Left cardiac atrium (tissue), 4 donors: ENCODE measurements at regions of chr6 and their contacts with region 1.

Region 1: GRCh38 chr6:158706096-158706982 is 56.5 kb downstream of the SYTL3 start:
- DNase-seq: peak; percentile 75
- ATAC-seq: peak; percentile 29 to 61

Region 2: GRCh38 chr6:158571826-158572652 is 134.3 kb before region 1 on chr6:
- intact Hi-C with region 1: no loop called
- DNase-seq: no peak
- ATAC-seq: peak in 1 of 2 donors; percentile 43

Region 3: DNA sequence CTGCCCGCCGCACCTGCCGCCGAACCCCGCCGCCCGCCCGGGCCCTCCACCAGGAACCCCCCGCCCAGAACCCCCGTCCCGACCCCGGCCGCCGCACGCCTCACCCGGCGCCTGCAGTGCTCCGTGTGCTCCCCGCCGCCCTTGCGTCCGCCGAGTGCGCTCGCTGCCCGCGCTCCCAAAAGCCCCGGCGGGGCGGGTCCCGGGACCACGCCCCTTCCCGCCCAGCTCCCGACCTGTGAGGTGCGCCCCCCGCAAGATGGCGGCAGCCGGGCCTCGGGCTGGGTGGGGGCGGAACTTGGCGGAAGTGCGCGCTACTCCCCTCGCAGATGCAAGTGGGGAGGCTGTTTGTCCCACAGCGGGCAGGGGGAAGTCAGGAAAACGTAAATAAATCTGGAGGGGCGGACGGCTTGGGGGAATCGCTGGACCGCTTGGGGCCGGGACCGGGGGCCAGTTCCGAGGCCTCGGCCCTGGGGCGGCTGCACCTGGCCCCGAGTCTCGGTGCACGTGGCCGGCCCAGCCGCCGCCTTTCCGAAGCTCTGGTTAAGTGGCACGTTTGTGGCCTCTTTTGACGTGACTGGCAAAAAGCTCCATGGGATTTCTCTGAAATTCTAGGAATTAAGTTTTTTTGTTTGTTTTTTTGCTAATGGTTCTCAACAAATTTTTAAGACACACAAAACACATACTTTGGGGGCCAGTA is 113.0 kb after region 1 on chr6 and contains the start of gene EZR:
- intact Hi-C with region 1: loop called in 1 of 2 experiments (anchors 5 kb)
- DNase-seq: peak; percentile 86
- ATAC-seq: peak; percentile 74 to 83
- total RNA-seq, gene EZR: 140 to 217 TPM